Sigmoid colon (tissue), 7 donors: ENCODE measurements at regions of chr2 and their contacts with region 1.

Region 1: DNA sequence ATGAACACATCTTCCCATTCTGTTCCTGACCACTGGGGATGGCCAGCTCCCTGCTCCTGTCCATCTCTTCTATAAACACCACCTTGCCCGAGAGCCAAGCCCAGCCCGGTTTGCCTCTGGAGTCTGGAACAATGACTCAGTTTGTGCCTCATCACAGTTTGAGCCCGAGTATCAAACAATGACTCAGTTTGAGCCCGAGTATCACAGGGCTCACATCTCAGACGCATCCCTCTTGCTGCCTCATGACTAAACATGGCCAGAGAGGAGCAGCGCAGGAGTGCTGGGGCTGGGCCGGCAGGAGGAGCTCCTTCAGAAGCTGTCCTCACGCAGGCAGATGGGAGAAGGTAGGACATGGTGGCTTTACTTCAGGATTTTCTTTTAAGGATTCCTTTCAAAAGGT is 68.7 kb downstream of the PXDN start:
- DNase-seq: peak; percentile 95
- H3K4me3 ChIP-seq: no peak overlapping the region
- H3K27ac ChIP-seq: peak overlapping the region; percentile 80 to 95 (median 86)
- H3K4me1 ChIP-seq: peaks cover 0 to 40% (median 27%) of the 10 kb centered on the region in 4 donors
- H3K27me3 ChIP-seq: no peaks in the 10 kb centered on the region
- CTCF ChIP-seq: peak; percentile 37 to 62 (median 45)
- EP300 ChIP-seq: peak in 2 of 4 donors; percentile 22 to 88
- POLR2A ChIP-seq: no peak

Region 2: DNA sequence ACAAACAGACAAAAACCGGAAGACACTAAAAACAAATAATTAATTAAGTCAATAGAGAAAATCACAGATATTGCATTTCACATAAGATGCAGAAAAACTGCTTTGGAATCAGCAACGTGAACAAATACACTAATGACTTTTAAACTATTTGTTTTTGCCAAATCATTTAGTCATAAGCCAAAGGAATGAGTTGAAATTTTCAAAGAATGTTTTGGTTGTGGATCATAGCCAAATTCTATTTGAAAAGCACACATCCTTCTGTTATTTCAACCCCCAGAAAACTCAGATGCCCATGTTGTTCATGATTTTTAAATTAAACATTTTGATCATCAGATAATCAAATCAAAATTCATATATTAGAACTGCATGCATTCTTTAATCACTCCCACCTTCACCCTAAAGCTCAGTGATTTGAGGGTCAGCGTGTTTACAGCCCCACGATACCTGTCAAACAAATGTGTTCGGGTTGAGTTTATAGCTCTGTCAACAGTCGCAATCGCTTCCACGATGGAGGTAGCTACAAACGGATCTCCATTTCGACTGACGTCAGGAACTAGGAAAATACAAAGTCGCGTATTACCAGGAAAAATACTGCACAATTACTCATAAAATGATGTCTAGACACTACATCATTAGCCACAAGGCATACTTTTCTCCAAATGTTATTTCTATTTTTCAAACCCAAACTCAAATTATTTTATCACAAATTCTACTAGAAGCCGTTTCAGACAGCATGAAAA is 21.5 kb before region 1 on chr2:
- intact Hi-C with region 1: loop called (anchors 2 kb)
- DNase-seq: no peak
- H3K4me3 ChIP-seq: no peak overlapping the region
- H3K27ac ChIP-seq: peak overlapping the region; percentile 80 to 90 (median 86)
- H3K4me1 ChIP-seq: peaks cover 0 to 60% (median 50%) of the 10 kb centered on the region in 4 donors
- H3K27me3 ChIP-seq: no peaks in the 10 kb centered on the region
- CTCF ChIP-seq: no peak
- EP300 ChIP-seq: no peak
- POLR2A ChIP-seq: no peak